Heart right ventricle (tissue), 16 donors: ENCODE measurements at regions of chr1 and their contacts with region 1.

Region 1: GRCh38 chr1:218250492-218250891 is 34.6 kb upstream of the RRP15 start:
- DNase-seq: no peak
- ATAC-seq: no peak
- H3K4me3 ChIP-seq: no peak overlapping the region
- H3K27ac ChIP-seq: no peak overlapping the region
- H3K4me1 ChIP-seq: no peaks in the 10 kb centered on the region
- H3K27me3 ChIP-seq: peaks cover 0 to 10% (median 0%) of the 10 kb centered on the region in 7 donors
- CTCF ChIP-seq: no peak

Region 2: DNA sequence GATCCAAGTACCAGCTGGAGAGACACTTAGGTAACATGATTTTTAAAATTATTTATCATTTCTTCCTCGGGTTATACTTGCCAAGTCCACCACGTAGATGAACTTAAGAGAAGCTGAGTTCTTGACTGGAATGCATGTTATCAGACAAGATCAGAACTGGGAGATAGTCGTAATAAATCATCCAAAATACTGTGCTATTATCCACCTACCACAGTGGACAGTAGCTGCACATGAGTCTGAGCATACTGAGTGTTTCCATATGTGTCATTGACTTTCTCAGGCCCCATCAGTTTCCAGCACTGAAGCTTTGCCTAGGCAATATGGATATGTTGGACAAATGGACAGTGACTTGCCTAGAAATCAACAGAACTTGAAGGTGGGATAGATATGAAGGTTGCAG is 43.3 kb before region 1 on chr1:
- intact Hi-C with region 1: loop called in 1 of 10 experiments (anchors 1 kb)
- DNase-seq: no peak
- ATAC-seq: no peak
- H3K4me3 ChIP-seq: no peak overlapping the region
- H3K27ac ChIP-seq: no peak overlapping the region
- H3K4me1 ChIP-seq: no peaks in the 10 kb centered on the region
- H3K27me3 ChIP-seq: peaks cover 0 to 35% (median 3%) of the 10 kb centered on the region in 7 donors
- CTCF ChIP-seq: no peak